ENCODE measurements at regions of chrX and their contacts with region 1.

Region 1: DNA sequence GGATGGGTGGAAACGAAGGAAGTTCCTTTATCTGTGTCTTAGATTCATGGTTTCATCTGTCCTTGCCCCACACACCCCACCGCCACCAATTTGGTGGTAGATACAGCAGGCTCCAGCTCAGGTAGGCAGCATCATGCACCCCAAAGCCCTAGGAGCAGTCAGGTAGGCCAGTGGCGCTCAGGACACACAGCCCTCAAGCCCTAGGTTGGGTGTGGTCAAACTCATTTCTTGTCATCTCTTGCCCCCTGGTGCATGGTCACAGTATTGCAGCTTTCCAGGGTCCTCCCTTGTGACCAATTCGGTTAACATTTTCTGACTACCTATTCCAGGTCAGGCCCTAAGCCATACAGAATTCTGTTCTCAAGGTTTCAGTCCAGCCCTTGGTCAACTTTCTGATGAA is 14.5 kb upstream of the PRRG3 start:
- DNase-seq: peak in 1 of 2 donors; percentile 13
- ATAC-seq: no peak
- H3K4me3 ChIP-seq: no peak overlapping the region
- H3K27ac ChIP-seq: no peak overlapping the region
- H3K4me1 ChIP-seq: no peaks in the 10 kb centered on the region
- H3K27me3 ChIP-seq: no peaks in the 10 kb centered on the region
- CTCF ChIP-seq: peak; percentile 26 to 57 (median 52)
- POLR2A ChIP-seq: no peak

Region 2: DNA sequence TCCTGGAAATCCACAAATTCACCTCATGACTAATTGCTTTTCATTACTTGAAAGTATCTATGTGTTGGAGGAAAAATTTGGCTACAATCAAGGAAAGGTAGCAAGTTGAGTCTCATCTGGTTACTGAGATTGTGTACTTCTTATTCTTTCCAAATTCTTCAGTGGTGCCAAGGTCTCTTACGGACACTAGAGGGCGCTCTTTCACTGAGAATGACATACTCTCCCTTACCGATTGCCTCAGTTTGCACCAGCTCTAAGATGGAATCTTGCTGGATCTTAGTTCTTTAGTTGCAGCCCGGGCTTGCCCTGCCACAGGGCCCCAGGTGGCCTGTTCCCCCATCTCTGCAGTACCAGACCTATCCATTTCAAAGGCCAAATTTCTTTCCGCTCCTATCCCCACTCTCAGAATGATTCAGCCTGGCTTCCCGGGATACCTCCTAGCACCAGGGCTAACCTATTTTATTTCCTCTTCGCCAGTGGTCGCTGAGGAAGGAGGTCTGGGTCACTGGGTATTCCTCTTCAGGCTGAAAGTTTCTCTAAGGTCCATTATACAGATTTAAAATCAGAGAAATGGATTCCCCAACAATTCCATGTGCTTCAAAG is 529.0 kb before region 1 on chrX:
- in situ Hi-C with region 1: loop called (anchors 10 to 25 kb)
- intact Hi-C with region 1: no loop called
- DNase-seq: peak in 1 of 2 donors; percentile 12
- ATAC-seq: peak; percentile 51 to 74
- H3K4me3 ChIP-seq: no peak overlapping the region
- H3K27ac ChIP-seq: no peak overlapping the region
- H3K4me1 ChIP-seq: no peaks in the 10 kb centered on the region
- H3K27me3 ChIP-seq: no peaks in the 10 kb centered on the region
- CTCF ChIP-seq: peak; percentile 41 to 71 (median 55)
- POLR2A ChIP-seq: no peak

Region 3: DNA sequence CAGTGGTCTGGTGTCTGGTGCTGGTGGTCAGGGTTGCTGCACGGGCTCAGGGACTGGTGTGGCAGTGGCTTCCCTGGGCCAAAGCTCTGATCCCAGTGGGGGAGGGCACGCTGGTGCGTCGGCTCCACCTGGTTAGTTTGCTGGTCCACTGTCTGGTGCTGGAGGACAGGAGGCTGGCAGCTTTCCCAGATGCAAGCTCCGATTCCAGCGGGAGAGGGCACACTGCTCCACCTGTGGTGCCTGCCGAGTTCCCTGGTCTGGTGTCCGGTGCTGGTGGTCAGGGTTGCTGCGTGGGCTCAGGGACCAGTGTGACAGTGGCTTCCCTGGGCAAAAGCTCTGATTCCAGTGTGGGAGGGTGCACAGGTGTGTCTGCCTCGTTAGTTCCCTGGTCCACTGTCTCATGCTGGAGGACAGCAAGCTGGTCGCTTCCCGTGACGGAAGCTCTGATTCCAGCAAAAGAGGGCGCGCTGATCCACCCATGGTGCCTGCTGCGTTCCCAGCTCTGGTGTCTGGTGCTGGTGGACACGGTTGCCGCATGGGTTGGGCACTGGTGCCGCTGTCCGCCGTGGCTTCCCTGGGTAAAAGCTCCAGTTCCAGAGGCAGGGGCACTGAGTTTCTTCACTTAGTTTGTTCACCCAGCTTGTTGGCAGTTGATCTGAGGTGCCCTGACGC is 277.9 kb before region 1 on chrX:
- in situ Hi-C with region 1: no loop called
- intact Hi-C with region 1: loop called (anchors 2 kb)
- DNase-seq: peak; percentile 8 to 48
- ATAC-seq: peak in 1 of 2 donors; percentile 72
- H3K4me3 ChIP-seq: no peak overlapping the region
- H3K27ac ChIP-seq: no peak overlapping the region
- H3K4me1 ChIP-seq: peaks cover 9 to 11% of the 10 kb centered on the region in 2 donors
- H3K27me3 ChIP-seq: no peaks in the 10 kb centered on the region
- CTCF ChIP-seq: no peak
- POLR2A ChIP-seq: no peak